PC-9 (cell line): ENCODE measurements at regions of chr3 and their contacts with region 1.

Region 1: DNA sequence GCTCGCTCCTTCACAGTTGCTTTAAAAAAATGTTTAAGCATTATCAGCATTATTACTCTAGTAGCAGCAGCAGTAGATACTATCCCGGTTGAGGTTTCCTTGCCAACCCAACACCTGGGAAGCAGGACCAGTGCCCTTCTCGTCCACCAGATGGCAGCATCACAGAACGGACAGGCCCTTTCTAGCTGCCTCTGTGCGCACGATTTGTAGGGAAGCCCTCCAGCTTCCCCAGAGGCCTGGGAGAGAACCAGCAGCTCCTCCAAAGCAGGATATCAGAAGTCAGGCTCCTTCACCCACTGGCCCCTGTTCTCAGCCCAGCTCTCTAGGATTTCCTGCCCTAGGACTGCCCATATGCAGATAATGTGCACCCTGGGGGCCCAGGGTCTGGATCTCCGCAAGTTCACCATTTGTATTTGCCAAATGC is 16.8 kb upstream of the ESYT3 start:
- DNase-seq: peak; percentile 54 to 83
- H3K4me3 ChIP-seq: no peak overlapping the region
- H3K27ac ChIP-seq: no peak overlapping the region
- H3K4me1 ChIP-seq: no peaks in the 10 kb centered on the region
- H3K27me3 ChIP-seq: no peaks in the 10 kb centered on the region
- CTCF ChIP-seq: peak; percentile 88

Region 2: GRCh38 chr3:138180375-138181029 is 237.1 kb before region 1 on chr3:
- CTCF ChIA-PET with region 1: no interaction called
- POLR2A ChIA-PET with region 1: no interaction called
- intact Hi-C with region 1: loop called (anchors 5 kb)
- DNase-seq: no peak
- H3K4me3 ChIP-seq: no peak overlapping the region
- H3K27ac ChIP-seq: no peak overlapping the region
- H3K4me1 ChIP-seq: peaks cover 7% of the 10 kb centered on the region; the same call in 1 of the 2 replicates
- H3K27me3 ChIP-seq: no peaks in the 10 kb centered on the region
- CTCF ChIP-seq: peak; percentile 62

Region 3: DNA sequence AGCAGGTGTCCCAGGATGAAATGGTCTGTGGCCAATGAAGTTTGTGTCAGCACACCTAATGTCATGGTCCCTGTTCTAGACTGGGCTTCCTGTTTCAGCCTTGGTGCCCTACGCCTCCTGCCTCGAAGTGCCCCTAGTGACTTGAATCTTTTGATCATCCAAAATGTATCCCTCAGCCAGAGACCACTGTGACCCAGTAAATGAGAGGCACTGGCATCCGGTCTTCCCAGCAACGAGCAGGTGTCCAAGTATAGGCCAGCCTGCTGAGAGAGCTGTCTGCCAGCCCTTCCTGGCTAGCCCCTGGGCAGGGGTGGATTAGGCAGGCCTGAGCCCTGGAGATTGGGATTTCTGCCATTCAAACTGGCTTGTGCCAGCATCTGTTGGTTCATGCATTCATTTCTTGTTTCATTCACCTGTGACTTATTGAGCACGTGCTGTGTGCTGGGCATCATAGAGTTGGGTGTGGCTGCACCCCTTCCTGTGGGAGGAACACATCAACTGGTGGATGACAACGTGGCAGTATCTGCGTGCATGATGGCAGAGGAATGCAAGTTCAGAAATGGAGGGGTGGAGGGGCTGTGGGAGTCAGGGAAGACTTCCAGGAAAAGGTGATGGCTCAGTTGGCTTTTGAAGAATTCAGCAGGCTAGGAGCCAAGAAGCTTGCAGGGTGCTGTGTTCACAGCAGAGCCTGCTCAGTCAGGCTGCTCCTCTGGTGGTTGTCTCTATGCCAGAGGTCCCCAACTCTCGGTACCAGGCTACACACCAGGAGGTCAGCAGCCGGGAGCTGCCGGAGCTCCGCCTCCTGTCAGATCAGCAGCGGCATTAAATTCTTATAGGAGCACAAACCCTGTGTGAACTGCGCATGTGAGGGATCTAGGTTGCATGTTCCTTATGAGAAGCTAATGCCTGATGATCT is 38.5 kb after region 1 on chr3:
- CTCF ChIA-PET with region 1: no interaction called
- POLR2A ChIA-PET with region 1: no interaction called
- intact Hi-C with region 1: no loop called
- DNase-seq: no peak
- H3K4me3 ChIP-seq: no peak overlapping the region
- H3K27ac ChIP-seq: no peak overlapping the region
- H3K4me1 ChIP-seq: no peaks in the 10 kb centered on the region
- H3K27me3 ChIP-seq: no peaks in the 10 kb centered on the region
- CTCF ChIP-seq: no peak

Region 4: DNA sequence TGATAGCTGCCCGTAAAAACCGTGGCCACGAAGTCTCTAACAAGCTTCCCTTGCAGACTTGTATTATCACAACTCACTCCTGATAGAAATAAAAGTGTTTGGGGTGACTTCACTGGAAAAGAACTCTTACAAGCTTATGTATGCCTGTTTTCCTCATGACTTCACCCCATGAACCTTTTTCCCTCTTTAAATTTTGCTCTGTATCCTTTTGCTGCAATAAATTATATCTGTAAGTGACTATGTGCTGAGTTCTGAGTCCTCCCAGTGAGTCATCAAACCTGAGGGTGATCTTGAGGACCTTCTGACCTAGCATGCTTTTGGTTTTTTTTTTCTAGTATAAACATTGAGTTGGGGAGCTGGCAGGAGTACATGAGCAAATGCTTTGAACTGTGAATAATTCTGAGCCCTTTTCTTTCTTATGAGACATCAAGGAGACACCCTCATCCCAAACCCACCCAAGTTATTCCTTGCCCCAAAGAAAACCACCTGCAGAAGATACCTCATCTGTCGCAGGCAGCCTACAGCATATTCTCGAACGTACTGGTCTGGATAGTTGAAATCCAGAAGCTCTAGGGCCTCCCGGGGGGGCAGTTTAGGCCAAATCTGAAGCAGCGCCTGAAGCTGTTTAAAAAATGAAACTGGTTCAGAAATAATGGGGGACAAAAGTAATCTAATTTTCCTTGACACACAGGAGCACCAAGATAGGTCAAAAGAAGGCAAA is 276.9 kb after region 1 on chr3:
- CTCF ChIA-PET with region 1: no interaction called
- POLR2A ChIA-PET with region 1: no interaction called
- intact Hi-C with region 1: loop called (anchors 5 kb)
- DNase-seq: peak; percentile 52 to 94
- H3K4me3 ChIP-seq: no peak overlapping the region
- H3K27ac ChIP-seq: peak overlapping the region; percentile 71
- H3K4me1 ChIP-seq: peaks cover 26% of the 10 kb centered on the region
- H3K27me3 ChIP-seq: no peaks in the 10 kb centered on the region
- CTCF ChIP-seq: no peak

Region 5: GRCh38 chr3:138947060-138947852 is 529.7 kb after region 1 on chr3 and contains the starts of genes FOXL2 and FOXL2NB:
- CTCF ChIA-PET with region 1: interaction called, 10 read pairs
- POLR2A ChIA-PET with region 1: no interaction called
- intact Hi-C with region 1: no loop called
- DNase-seq: no peak
- H3K4me3 ChIP-seq: no peak within 1 kb of the TSS
- H3K27ac ChIP-seq: no peak within 1 kb of the TSS
- H3K4me1 ChIP-seq: no peaks in the 10 kb centered on the region
- H3K27me3 ChIP-seq: 0 out of 2 replicates have a peak, but pooled peaks cover 6% of the 10 kb centered on the region
- CTCF ChIP-seq: no peak
- total RNA-seq, gene FOXL2: not detected in 2 replicates
- total RNA-seq, gene FOXL2NB: 0.09 and 0.18 TPM in 2 replicates